SK-N-SH (cell line): ENCODE measurements at regions of chr6 and their contacts with region 1.

Region 1: DNA sequence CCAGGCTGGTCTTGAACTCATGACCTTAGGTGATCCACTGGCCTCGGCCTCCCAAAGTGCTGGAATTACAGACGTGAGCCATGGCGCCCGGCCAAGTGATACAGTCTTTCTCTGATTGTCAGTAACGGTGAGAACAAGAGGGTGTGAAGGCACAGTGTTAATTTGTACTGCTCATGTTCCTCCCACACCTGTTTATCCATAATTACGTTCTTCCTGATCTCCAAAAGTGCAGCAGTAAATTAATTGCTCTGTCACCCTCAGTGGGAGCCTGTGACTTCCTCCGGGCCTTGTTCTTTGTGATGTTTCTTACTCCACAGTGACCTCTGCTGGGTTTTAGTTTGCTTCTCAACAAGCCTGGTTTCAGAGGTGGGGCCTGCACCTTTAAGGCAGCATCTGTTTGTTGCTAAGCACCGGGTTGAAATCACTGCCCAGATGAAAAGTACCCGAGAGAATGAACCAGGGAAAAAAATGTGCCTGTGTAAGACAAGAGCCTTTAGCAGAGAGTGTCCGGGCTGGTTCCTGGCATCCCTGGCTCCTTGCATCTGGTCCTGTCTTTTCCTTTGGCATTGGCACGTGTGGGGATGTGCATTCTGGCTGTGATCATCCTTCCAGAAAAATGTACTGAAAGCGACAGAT is 89.1 kb upstream of the CLDN20 start:
- DNase-seq: peak; percentile 83
- H3K4me3 ChIP-seq: no peak overlapping the region; a peak in 1 of 4 replicates
- H3K27ac ChIP-seq: peak overlapping the region; percentile 28 to 63
- H3K4me1 ChIP-seq: peaks cover 10 to 20% of the 10 kb centered on the region in 2 experiments
- H3K27me3 ChIP-seq: no peaks in the 10 kb centered on the region
- CTCF ChIP-seq: peak; percentile 74
- EP300 ChIP-seq: no peak
- RAD21 ChIP-seq: peak; percentile 92

Region 2: DNA sequence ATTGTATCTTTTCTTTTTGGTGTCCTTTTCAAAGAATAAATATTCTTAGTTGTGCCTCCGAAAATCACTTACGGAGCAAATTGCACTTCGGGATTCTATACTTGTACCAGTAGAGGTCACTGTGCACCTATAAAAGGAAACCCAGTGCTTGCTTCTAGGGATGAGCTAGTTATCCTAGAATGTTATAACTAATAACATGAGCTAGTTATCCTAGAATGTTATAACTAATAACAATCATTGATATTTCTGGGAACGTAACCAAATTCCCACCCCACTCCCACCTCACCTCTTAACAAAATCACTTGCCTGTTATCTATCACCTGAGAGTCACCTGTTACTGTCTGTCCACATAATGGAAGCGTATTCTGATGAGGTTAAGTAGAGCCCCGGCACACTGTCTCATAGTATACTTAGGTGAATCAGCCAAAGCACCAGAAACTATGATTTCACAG is 306.5 kb before region 1 on chr6:
- CTCF ChIA-PET with region 1: interaction called, 13 read pairs
- POLR2A ChIA-PET with region 1: no interaction called
- DNase-seq: peak; percentile 46
- H3K4me3 ChIP-seq: no peak overlapping the region
- H3K27ac ChIP-seq: peak overlapping the region in 1 of 2 experiments; percentile 38; a peak in 1 of 4 replicates
- H3K4me1 ChIP-seq: peaks cover 0 to 4% of the 10 kb centered on the region in 2 experiments; a peak in 1 of 4 replicates
- H3K27me3 ChIP-seq: no peaks in the 10 kb centered on the region
- CTCF ChIP-seq: peak; percentile 84
- EP300 ChIP-seq: no peak
- RAD21 ChIP-seq: peak; percentile 87

Region 3: DNA sequence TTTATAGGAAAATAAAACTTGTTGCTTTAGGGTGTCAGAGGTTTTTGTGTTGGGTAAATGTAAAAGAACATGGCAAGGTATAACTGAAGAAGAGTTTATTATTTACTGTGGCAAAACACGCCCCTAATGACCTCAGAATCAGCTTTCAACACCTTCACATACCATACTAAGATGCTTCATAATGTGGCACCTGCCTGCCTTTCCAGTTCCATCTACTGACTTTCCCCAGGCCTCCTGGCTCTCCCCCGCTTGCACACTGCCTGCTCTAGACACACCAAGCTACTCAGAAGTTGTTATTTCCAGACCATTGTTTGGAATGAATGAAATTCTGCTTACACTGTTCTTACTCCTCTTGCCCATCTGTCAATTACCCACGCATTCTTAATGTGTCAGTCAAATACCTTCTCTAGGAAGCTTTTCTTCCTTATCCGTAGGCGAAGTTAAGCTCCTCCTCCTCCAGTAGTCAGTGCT is 177.8 kb before region 1 on chr6:
- CTCF ChIA-PET with region 1: interaction called, 10 read pairs
- POLR2A ChIA-PET with region 1: no interaction called
- DNase-seq: no peak
- H3K4me3 ChIP-seq: peak overlapping the region; percentile 75; a peak in 3 of 4 replicates
- H3K27ac ChIP-seq: no peak overlapping the region
- H3K4me1 ChIP-seq: peaks cover 5% of the 10 kb centered on the region in 2 experiments; a peak in 2 of 4 replicates
- H3K27me3 ChIP-seq: no peaks in the 10 kb centered on the region
- CTCF ChIP-seq: no peak
- EP300 ChIP-seq: no peak
- RAD21 ChIP-seq: no peak

Region 4: GRCh38 chr6:155253337-155253736 is 78.6 kb after region 1 on chr6:
- CTCF ChIA-PET with region 1: interaction called, 44 read pairs
- POLR2A ChIA-PET with region 1: no interaction called
- DNase-seq: no peak
- H3K4me3 ChIP-seq: no peak overlapping the region
- H3K27ac ChIP-seq: peak overlapping the region in 1 of 2 experiments; percentile 32; a peak in 2 of 4 replicates
- H3K4me1 ChIP-seq: peaks cover 0 to 12% of the 10 kb centered on the region in 2 experiments; a peak in 2 of 4 replicates
- H3K27me3 ChIP-seq: no peaks in the 10 kb centered on the region
- CTCF ChIP-seq: no peak
- EP300 ChIP-seq: no peak
- RAD21 ChIP-seq: no peak

Region 5: DNA sequence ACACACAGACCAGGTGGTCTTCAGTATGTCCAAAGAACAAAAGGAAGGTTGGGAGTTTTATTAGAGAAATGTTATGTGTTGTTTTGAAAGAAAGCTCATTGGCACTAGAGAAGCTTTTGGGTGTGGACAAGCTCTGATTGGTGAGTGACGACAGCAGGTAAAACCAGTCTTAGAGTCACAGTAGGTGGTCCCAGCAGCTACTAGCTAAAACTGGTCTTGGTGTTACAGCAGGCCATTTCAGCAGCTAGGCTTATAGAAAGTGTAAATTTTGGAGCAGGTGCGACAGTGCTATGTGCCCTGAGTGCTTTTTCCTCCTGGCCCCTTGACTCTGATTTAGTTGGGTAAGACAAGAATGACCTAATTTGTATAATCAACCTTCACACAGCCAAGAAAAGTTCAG is 92.7 kb after region 1 on chr6:
- CTCF ChIA-PET with region 1: interaction called, 11 read pairs
- POLR2A ChIA-PET with region 1: no interaction called
- DNase-seq: no peak
- H3K4me3 ChIP-seq: no peak overlapping the region
- H3K27ac ChIP-seq: peak overlapping the region in 1 of 2 experiments; percentile 97; a peak in 2 of 4 replicates
- H3K4me1 ChIP-seq: peaks cover 5 to 65% of the 10 kb centered on the region in 2 experiments; a peak in 2 of 4 replicates
- H3K27me3 ChIP-seq: no peaks in the 10 kb centered on the region
- CTCF ChIP-seq: no peak
- EP300 ChIP-seq: no peak
- RAD21 ChIP-seq: no peak